Tibial artery (tissue), 4 donors: ENCODE measurements at regions of chr10 and their contacts with region 1.

Region 1: GRCh38 chr10:93753621-93754250 is 4.0 kb upstream of the LGI1 start:
- DNase-seq: no peak
- H3K4me3 ChIP-seq: no peak overlapping the region
- H3K27ac ChIP-seq: no peak overlapping the region
- H3K4me1 ChIP-seq: peaks cover 0 to 43% (median 6%) of the 10 kb centered on the region in 4 donors
- H3K27me3 ChIP-seq: no peaks in the 10 kb centered on the region
- CTCF ChIP-seq: no peak

Region 2: DNA sequence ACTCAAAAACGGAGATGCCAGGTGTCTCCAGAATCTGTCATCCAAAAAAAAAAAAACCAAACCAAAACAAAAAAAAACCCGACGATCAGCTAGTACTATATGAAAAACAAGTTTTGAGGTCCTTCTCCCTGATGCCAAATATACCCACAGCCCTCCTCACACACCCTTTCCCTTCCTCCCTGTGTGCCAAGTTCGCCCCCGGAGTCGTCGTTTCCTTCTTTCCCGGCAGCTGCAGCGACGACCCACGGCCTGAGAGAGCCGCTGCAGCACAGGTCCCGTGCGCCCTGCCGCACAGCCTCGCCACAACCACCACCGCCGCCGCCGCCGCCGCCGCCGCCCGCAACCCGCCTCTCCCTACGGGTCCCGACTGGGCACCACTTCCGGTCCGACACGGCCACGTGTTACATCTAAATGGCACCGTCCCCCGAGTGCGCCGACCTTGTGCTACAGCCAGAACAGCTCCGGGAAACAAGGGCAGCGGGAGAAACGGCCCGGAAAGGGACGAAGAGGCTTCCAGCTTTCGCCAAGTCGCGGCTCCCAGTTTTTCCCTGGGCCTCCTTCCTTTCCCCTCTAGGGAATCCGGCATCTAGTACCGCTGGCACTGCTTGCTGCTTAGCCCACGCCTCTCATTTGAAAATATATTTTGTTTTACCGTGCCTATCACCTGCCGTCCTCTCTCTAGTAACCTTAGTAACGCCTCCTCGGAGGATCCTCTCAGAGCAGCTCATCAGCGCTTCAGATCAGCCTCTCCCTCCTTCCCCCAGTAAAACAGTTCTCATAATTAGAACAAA is 51.3 kb before region 1 on chr10 and contains the start of gene FRA10AC1:
- intact Hi-C with region 1: loop called (anchors 2 kb)
- DNase-seq: peak; percentile 94
- H3K4me3 ChIP-seq: peak within 1 kb of the TSS; percentile 57 to 74
- H3K27ac ChIP-seq: peak within 1 kb of the TSS; percentile 85 to 91
- H3K4me1 ChIP-seq: peaks cover 0 to 26% (median 5%) of the 10 kb centered on the region in 4 donors
- H3K27me3 ChIP-seq: no peaks in the 10 kb centered on the region
- CTCF ChIP-seq: peak; percentile 49 to 55